ENCODE measurements at regions of chr21 and their contacts with region 1.

Region 1: DNA sequence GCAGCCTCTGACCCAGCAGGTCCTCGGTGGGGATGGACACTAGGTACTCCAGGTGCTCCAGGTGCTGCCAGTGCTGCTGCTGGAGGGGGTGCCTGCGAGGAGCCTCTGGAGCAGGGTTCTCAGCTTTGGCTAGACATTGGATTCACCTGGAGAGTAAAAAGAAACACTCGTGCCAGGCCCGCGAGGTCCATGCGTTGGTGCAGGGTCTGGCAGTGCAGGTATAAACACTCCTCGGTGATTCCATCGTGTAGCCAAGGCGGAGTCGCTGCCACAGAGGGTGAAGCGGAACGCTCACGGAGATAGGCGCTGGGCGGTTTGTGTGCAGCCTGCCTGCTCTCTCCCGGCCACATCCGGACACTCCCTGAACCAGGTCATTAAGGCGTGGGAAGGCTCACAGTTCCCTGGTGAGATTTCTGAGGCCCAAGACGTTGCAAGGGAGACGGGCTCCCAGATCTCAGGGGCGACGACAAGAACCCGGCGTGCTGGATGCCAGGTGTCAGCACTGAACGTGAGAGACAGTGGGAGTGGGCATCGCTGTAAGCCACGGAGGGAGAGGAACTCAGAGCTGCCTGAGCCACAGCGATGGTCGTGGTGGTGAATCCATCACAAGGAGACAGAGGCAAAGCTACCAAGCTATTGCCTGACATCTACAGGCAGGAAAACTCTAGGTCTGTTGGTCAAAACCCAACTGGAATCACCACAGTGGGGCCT is 17.2 kb upstream of the SUMO3 start:
- DNase-seq: no peak
- ATAC-seq: no peak
- H3K4me3 ChIP-seq: no peak overlapping the region
- H3K27ac ChIP-seq: no peak overlapping the region
- H3K4me1 ChIP-seq: peaks cover 5% of the 10 kb centered on the region; the same call in 1 of the 2 replicates
- H3K27me3 ChIP-seq: peaks cover 20% of the 10 kb centered on the region
- CTCF ChIP-seq: no peak
- POLR2A ChIP-seq: no peak
- RAD21 ChIP-seq: no peak

Region 2: GRCh38 chr21:44503901-44504399 is 331.1 kb before region 1 on chr21:
- CTCF ChIA-PET with region 1: no interaction called
- POLR2A ChIA-PET with region 1: no interaction called
- dilution Hi-C with region 1: no loop called
- in situ Hi-C with region 1: no loop called
- intact Hi-C with region 1: no loop called
- DNase-seq: no peak
- ATAC-seq: no peak
- H3K4me3 ChIP-seq: no peak overlapping the region
- H3K27ac ChIP-seq: no peak overlapping the region
- H3K4me1 ChIP-seq: no peaks in the 10 kb centered on the region
- H3K27me3 ChIP-seq: peaks cover 26% of the 10 kb centered on the region
- CTCF ChIP-seq: no peak
- POLR2A ChIP-seq: no peak
- RAD21 ChIP-seq: no peak

Region 3: DNA sequence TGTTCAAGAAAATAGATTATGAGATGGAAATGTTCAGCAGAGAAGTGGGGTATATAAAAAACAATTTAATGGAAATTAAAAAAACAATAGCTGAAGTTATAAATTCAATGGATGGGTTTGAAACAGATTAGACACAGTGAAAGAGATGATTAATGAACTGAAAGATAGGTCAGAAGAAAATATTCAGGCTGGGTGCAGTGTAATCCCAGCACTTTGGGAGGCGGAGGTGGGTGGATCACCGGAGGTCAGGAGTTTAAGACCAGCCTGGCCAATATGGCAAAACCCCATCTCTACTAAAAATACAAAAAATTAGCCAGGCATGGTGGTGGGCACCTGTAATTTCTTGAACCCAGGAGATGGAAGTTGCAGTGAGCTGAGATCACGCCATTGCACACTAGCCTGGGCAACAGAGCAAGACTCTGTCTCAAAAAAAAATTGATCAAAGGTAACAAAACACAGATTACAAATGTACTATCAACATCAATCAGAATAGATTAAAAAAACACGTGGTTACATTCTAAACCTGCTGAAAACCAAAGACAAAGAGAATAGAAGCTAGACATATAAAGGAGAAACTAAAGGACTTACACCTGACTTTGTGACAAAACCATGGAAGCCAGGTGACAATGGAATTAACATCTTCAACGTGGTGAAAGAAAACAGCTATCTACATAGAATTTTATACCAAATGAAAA is 12.5 kb before region 1 on chr21:
- CTCF ChIA-PET with region 1: no interaction called
- POLR2A ChIA-PET with region 1: no interaction called
- dilution Hi-C with region 1: no loop called
- in situ Hi-C with region 1: no loop called
- intact Hi-C with region 1: loop called (anchors 1 kb)
- DNase-seq: no peak
- ATAC-seq: no peak
- H3K4me3 ChIP-seq: no peak overlapping the region
- H3K27ac ChIP-seq: no peak overlapping the region
- H3K4me1 ChIP-seq: 0 out of 2 replicates have a peak, but pooled peaks cover 2% of the 10 kb centered on the region
- H3K27me3 ChIP-seq: peaks cover 6% of the 10 kb centered on the region
- CTCF ChIP-seq: no peak
- POLR2A ChIP-seq: no peak
- RAD21 ChIP-seq: no peak

Region 4: GRCh38 chr21:45152265-45152746 is 317.2 kb after region 1 on chr21:
- CTCF ChIA-PET with region 1: no interaction called
- POLR2A ChIA-PET with region 1: no interaction called
- dilution Hi-C with region 1: no loop called
- in situ Hi-C with region 1: no loop called
- intact Hi-C with region 1: no loop called
- DNase-seq: no peak
- ATAC-seq: no peak
- H3K4me3 ChIP-seq: no peak overlapping the region
- H3K27ac ChIP-seq: no peak overlapping the region
- H3K4me1 ChIP-seq: peaks cover 20% of the 10 kb centered on the region
- H3K27me3 ChIP-seq: no peaks in the 10 kb centered on the region
- CTCF ChIP-seq: 0 out of 2 replicates have a peak, but pooled peaks have one; percentile 6
- POLR2A ChIP-seq: no peak
- RAD21 ChIP-seq: peak; percentile 28; the same call in 1 of the 2 replicates

Measured in IMR-90 (cell line).